Ascending aorta (tissue), 2 donors: ENCODE measurements at regions of chr2 and their contacts with region 1.

Region 1: DNA sequence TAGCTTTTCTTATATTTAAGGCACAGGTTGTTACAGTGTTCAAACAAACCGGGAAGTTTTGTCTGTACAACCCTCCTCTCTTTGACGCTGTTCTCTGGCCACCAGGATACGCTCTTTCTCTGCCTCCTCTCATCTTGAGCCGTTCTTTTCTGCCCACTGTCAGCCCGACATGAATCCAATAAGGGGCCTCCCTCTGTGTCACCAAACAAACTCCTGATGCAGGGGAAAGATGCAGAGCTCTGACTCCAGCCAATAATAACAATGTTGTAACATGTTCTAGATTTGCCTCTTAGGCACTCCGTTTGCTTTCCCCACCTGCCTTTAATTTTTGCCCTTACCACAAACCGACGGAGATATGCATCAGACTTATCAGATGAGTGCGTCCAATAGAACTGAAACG is 449.3 kb downstream of the SLC4A3 start:
- DNase-seq: peak in 1 of 2 donors; percentile 78
- H3K4me3 ChIP-seq: peak overlapping the region in 1 of 2 donors; percentile 32
- H3K27ac ChIP-seq: peak overlapping the region; percentile 80 to 85
- H3K4me1 ChIP-seq: peaks cover 0 to 23% of the 10 kb centered on the region in 2 donors
- H3K27me3 ChIP-seq: no peaks in the 10 kb centered on the region
- CTCF ChIP-seq: peak; percentile 21 to 45 (median 22)

Region 2: GRCh38 chr2:219642465-219643080 is 434.2 kb before region 1 on chr2:
- intact Hi-C with region 1: loop called (anchors 5 kb)
- DNase-seq: peak; percentile 90 to 99
- H3K4me3 ChIP-seq: no peak overlapping the region
- H3K27ac ChIP-seq: no peak overlapping the region
- H3K4me1 ChIP-seq: peaks cover 0 to 12% of the 10 kb centered on the region in 2 donors
- H3K27me3 ChIP-seq: no peaks in the 10 kb centered on the region
- CTCF ChIP-seq: peak; percentile 99 to 100 (median 99)

Region 3: DNA sequence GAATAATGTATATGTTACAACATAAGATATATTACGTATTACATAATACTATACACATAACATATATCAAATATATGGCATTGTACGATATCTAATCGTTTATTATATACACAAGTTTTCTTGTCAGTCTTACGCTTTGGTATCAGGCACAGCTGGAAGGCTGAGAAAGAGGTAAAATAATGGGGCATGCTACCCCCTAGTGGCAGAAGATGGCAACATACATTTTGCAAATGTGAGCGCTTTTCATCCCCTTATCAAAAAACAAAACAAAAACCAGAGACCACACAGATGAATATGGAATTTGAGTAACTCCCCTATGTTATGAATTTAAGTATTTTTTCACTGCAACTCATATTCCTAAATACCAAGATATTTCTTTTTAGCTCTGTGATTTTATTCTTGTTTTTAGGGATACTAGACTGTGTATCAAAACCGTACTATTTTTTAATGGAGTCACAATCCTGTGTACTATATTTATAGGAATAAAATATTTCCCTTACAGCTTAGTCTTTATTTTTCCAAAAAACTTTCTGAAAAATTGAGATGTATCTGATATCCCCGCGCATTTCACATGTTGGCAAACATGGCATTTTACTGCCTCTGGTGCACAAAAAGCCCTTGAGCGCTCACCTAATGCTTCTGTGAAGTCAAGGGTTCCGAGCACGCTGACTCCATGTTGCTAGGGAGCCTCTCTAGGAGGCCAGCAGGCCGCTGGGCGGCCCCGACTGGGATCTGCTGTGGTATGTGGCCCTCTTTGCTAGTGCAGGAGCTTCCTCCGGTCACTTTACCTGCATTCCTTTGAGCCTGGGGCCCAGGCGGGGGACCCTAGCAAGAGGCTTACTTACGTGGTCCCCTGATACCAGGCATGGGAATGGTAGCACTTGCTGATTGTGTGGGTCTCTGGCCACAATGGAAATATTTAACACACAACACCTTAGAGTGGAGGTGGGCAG is 386.8 kb before region 1 on chr2:
- intact Hi-C with region 1: loop called (anchors 2 kb)
- DNase-seq: peak in 1 of 2 donors; percentile 72
- H3K4me3 ChIP-seq: peak overlapping the region in 1 of 2 donors; percentile 52
- H3K27ac ChIP-seq: peak overlapping the region; percentile 87 to 88
- H3K4me1 ChIP-seq: peaks cover 6 to 30% of the 10 kb centered on the region in 2 donors
- H3K27me3 ChIP-seq: no peaks in the 10 kb centered on the region
- CTCF ChIP-seq: peak; percentile 60 to 74 (median 72)

Region 4: DNA sequence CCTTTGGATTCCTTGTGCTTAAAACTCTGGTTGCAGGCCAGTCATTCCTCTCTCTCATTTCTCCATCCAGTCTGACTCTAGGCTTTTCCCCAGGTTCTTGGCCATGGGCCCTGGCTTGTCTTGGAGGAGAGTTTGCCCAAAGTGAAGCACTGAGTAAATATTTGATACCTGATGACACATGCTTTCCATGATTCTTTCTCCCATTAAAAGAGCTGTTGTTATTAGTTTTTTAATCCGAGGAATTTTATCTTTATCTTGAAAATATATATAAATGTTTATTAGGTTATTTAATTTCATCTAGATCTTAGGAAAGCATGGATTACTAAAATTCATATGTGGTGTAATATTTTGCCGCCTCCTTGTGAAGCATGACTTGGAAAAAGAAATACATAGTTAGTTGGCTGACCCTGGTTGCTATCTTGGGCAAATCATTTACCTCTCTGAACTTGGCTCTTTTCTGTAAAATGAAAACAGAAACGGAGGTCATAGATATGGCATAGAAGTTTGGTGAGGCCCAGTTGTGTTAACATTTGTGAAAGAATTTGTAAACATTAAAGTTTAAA is 200.8 kb after region 1 on chr2:
- intact Hi-C with region 1: loop called (anchors 2 kb)
- DNase-seq: peak; percentile 16 to 87
- H3K4me3 ChIP-seq: no peak overlapping the region
- H3K27ac ChIP-seq: peak overlapping the region; percentile 55 to 64
- H3K4me1 ChIP-seq: peaks cover 0 to 15% of the 10 kb centered on the region in 2 donors
- H3K27me3 ChIP-seq: no peaks in the 10 kb centered on the region
- CTCF ChIP-seq: no peak

Region 5: DNA sequence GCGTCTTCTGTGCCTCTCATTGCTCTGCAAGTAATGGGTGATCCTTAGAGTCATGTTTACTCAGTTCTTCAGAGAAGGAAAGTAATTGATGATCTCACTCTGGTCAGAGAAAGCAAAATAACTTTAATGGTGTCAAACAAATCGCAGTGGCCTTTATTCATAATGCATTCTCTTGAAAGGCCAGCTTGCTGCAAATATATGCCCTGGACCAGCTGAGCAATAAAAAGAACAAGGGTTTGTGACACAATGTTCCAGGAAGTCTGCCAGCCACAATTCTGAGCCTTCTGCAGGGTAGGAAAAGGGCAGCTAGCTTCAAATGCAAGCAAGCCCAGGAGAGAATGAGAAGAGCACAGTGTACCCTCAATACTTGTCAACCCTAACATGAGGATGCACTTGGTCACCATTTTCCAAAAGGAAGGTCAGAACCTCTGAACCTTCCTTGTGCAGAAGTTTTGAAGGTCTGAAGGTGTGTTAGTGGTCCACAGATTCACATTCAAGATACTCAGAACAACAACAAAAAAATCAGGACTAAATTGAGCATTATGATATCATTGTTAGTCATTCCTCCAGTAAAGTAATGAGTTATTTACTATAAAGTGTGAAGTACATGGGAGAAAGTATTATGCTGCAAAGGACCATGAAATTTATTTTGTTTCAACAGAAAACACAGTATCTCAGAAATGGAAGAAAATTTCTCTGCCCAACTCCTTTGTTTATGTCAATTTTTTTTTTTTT is 1866.5 kb after region 1 on chr2:
- intact Hi-C with region 1: loop called (anchors 5 kb)
- DNase-seq: peak in 1 of 2 donors; percentile 85
- H3K4me3 ChIP-seq: no peak overlapping the region
- H3K27ac ChIP-seq: peak overlapping the region; percentile 44 to 74
- H3K4me1 ChIP-seq: peaks cover 0 to 14% of the 10 kb centered on the region in 2 donors
- H3K27me3 ChIP-seq: no peaks in the 10 kb centered on the region
- CTCF ChIP-seq: no peak